Heart left ventricle (tissue), 16 donors: ENCODE measurements at regions of chr17 and their contacts with region 1.

Region 1: GRCh38 chr17:35540589-35541404 is 3.3 kb upstream of the SLFN12L start:
- DNase-seq: peak; percentile 40 to 68 (median 56)
- ATAC-seq: peak; percentile 28 to 75 (median 60)
- H3K4me3 ChIP-seq: peak overlapping the region in 9 of 12 donors; percentile 32 to 57 (median 42)
- H3K27ac ChIP-seq: peak overlapping the region; percentile 50 to 93 (median 60)
- H3K4me1 ChIP-seq: peaks cover 0 to 54% (median 32%) of the 10 kb centered on the region in 12 donors
- H3K27me3 ChIP-seq: no peaks in the 10 kb centered on the region
- CTCF ChIP-seq: no peak
- POLR2A ChIP-seq: no peak

Region 2: DNA sequence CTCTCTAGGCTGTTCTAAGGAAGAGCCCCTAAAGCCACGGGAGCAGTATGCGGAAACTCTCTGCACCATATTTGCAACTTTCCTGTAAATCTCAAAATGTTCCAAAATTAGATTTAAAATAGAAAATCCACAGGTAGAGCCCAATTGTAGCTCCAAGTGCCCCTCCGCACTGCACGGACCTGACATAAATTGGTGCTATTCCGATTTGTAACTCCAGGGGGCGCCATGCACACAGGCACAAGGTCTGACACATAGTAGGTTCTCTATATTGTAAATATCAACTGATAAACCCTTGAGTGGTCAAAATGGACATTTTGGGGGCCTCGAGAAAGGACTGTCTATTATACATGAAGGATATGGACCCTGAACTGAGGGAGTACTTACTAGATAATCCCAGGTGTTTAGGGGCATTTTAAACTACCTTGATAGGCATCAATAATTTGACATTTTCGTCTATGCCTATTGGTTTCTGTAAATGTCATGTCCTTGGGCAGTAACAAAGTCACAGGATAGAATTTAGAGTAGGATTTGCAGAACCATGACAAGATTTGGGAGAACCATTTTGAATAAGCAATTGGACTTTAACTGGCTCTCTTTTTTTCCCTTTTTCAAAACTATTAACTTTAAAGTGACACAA is 998.0 kb before region 1 on chr17:
- intact Hi-C with region 1: loop called in 1 of 10 experiments (anchors 5 kb)
- DNase-seq: peak in 1 of 5 donors; percentile 44
- ATAC-seq: no peak
- H3K4me3 ChIP-seq: no peak overlapping the region
- H3K27ac ChIP-seq: no peak overlapping the region
- H3K4me1 ChIP-seq: no peaks in the 10 kb centered on the region
- H3K27me3 ChIP-seq: peaks cover 0 to 58% (median 15%) of the 10 kb centered on the region in 9 donors
- CTCF ChIP-seq: peak; percentile 63 to 91 (median 79)
- POLR2A ChIP-seq: no peak

Region 3: GRCh38 chr17:35170968-35171771 is 369.6 kb before region 1 on chr17:
- intact Hi-C with region 1: loop called in 7 of 10 experiments (anchors 2 to 5 kb)
- DNase-seq: no peak
- ATAC-seq: peak in 2 of 4 donors; percentile 14 to 23
- H3K4me3 ChIP-seq: no peak overlapping the region
- H3K27ac ChIP-seq: no peak overlapping the region
- H3K4me1 ChIP-seq: peaks cover 0 to 11% (median 0%) of the 10 kb centered on the region in 12 donors
- H3K27me3 ChIP-seq: no peaks in the 10 kb centered on the region
- CTCF ChIP-seq: peak in 9 of 12 donors; percentile 13 to 53 (median 33)
- POLR2A ChIP-seq: no peak

Region 4: GRCh38 chr17:35373534-35373983 is 167.2 kb before region 1 on chr17 and contains the start of gene SLFN11:
- intact Hi-C with region 1: loop called in 2 of 10 experiments (anchors 5 to 10 kb)
- DNase-seq: peak; percentile 90 to 92 (median 91)
- ATAC-seq: peak; percentile 91 to 98 (median 93)
- H3K4me3 ChIP-seq: peak within 1 kb of the TSS; percentile 27 to 82 (median 72)
- H3K27ac ChIP-seq: peak within 1 kb of the TSS; percentile 92 to 98 (median 95)
- H3K4me1 ChIP-seq: peaks cover 0 to 65% (median 13%) of the 10 kb centered on the region in 12 donors
- H3K27me3 ChIP-seq: peaks cover 0 to 20% (median 0%) of the 10 kb centered on the region in 9 donors
- CTCF ChIP-seq: no peak
- POLR2A ChIP-seq: peak; percentile 84 to 98
- total RNA-seq, gene SLFN11: 15.3 to 46.0 (median 17.5) TPM

Region 5: GRCh38 chr17:35448214-35448898 is 92.4 kb before region 1 on chr17 and contains the start of gene SLFN13:
- intact Hi-C with region 1: loop called in 1 of 10 experiments (anchors 5 kb)
- DNase-seq: peak; percentile 87 to 91 (median 88)
- ATAC-seq: peak; percentile 80 to 95 (median 91)
- H3K4me3 ChIP-seq: peak within 1 kb of the TSS; percentile 1 to 79 (median 57)
- H3K27ac ChIP-seq: peak within 1 kb of the TSS in 11 of 12 donors; percentile 35 to 86 (median 65)
- H3K4me1 ChIP-seq: peaks cover 0 to 24% (median 6%) of the 10 kb centered on the region in 12 donors
- H3K27me3 ChIP-seq: peaks cover 0 to 30% (median 6%) of the 10 kb centered on the region in 9 donors
- CTCF ChIP-seq: no peak
- POLR2A ChIP-seq: no peak
- total RNA-seq, gene SLFN13: 0.94 to 14.8 (median 4.5) TPM

Region 6: DNA sequence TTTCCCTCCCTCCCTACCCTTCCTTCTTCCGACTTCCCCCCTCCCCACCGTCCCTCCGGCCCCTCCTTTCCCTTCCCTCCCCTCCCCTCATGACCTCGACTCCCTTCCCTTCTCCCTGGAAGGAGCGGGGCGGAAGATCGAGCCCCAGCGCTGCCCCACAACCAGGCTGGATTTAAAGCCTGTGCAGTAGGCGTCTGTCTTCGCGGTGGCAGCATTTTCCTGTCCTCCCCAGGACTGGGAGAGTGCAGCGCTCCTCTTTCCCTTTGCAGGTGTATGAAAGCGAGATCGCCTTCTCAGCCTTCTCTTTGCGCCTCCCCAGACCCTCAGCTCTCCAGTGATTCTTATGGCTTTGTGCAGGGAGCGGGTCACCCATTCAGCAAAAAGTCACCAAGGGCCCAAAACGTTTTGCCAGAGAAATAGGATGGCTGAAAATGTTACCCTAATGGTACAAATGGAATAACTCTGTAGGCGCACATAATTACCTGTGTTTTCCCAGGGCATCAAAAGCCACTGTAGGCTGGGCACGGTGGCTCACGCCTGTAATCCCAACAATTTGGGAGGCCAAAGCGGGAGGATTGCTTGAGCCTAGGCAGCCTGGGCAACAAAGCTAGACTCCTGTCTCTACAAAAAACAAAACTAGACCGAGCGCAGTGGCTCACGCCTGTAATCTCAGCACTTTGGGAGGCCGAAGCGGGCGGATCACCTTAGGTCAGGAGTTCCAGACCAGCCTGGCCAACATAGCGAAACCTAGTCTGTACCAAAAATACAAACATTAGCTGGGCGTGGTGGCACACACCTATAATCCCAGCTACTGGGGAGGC is 44.1 kb before region 1 on chr17:
- intact Hi-C with region 1: no loop called
- DNase-seq: no peak
- ATAC-seq: no peak
- H3K4me3 ChIP-seq: peak overlapping the region in 5 of 12 donors; percentile 2 to 10 (median 3)
- H3K27ac ChIP-seq: no peak overlapping the region
- H3K4me1 ChIP-seq: peaks cover 0 to 30% (median 1%) of the 10 kb centered on the region in 12 donors
- H3K27me3 ChIP-seq: peaks cover 21 to 90% (median 67%) of the 10 kb centered on the region in 9 donors
- CTCF ChIP-seq: no peak
- POLR2A ChIP-seq: no peak

Region 7: DNA sequence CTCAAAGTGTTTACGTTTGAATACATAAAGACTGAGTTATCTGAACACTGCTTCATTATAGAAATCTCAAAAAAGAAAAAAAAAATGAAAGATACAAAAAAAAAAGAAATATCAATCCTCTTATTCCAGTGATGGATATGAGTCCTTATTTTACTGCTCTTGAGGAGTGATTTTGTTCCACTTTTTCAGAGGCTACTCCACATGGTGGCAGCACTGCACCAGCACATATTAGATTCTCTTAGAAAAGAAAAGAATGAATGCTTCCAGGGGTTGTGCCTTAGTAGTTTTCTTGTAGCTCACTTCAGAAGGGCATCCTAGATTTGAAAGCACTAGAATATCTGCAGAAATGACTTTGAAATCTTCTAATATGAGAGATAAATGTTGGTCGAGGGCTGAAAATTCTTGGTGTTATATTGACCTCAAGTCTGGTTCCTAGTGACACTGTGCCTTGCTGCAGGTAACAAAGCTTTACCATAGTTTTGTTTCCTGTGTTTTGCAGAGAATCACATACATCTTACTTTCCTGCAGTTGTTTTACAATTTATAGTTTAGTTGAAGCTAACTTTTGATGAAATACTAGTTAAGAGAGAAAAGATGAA is 72.2 kb after region 1 on chr17:
- intact Hi-C with region 1: no loop called
- DNase-seq: peak in 2 of 5 donors; percentile 17 to 38
- ATAC-seq: peak in 1 of 4 donors; percentile 38
- H3K4me3 ChIP-seq: no peak overlapping the region
- H3K27ac ChIP-seq: no peak overlapping the region
- H3K4me1 ChIP-seq: peaks cover 0 to 23% (median 7%) of the 10 kb centered on the region in 12 donors
- H3K27me3 ChIP-seq: no peaks in the 10 kb centered on the region
- CTCF ChIP-seq: peak; percentile 19 to 69 (median 58)
- POLR2A ChIP-seq: no peak